ENCODE measurements at regions of chr5 and their contacts with region 1.

Region 1: GRCh38 chr5:151239237-151239861 is 13.6 kb upstream of the GM2A start:
- H3K4me3 Mint-ChIP-seq: no peak overlapping the region
- H3K27ac Mint-ChIP-seq: no peak overlapping the region
- H3K4me1 Mint-ChIP-seq: peaks cover 38% of the 10 kb centered on the region
- H3K27me3 Mint-ChIP-seq: peaks cover 5% of the 10 kb centered on the region

Region 2: DNA sequence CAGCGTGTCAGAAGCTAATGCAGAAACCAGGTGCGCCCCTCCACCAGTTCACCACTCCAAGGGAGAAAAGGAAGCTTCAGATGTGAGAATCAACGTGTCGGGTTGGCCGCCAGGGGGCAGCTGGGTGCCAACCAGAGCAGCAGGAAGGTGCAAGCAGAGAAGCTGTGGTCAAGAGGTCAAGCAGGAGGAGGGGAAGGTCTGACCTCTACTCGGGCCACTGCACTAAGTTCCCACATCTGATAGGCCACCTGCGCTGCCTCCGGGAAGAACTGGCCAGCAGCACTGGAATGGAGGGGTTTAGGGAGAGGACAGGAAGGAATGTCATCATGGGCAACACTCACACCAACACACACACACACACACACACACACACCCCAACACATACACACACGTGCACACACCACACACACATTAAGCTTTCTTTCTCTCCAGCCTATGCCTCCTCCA is 113.1 kb before region 1 on chr5:
- intact Hi-C with region 1: loop called (anchors 5 kb)
- H3K4me3 Mint-ChIP-seq: no peak overlapping the region
- H3K27ac Mint-ChIP-seq: no peak overlapping the region
- H3K4me1 Mint-ChIP-seq: peaks cover 25% of the 10 kb centered on the region
- H3K27me3 Mint-ChIP-seq: no peaks in the 10 kb centered on the region

Region 3: GRCh38 chr5:151196556-151197290 is 42.6 kb before region 1 on chr5:
- intact Hi-C with region 1: loop called (anchors 5 kb)
- H3K4me3 Mint-ChIP-seq: no peak overlapping the region
- H3K27ac Mint-ChIP-seq: no peak overlapping the region
- H3K4me1 Mint-ChIP-seq: peaks cover 28% of the 10 kb centered on the region
- H3K27me3 Mint-ChIP-seq: no peaks in the 10 kb centered on the region

Region 4: GRCh38 chr5:151298063-151298855 is 58.9 kb after region 1 on chr5:
- intact Hi-C with region 1: loop called (anchors 5 kb)
- H3K4me3 Mint-ChIP-seq: no peak overlapping the region
- H3K27ac Mint-ChIP-seq: no peak overlapping the region
- H3K4me1 Mint-ChIP-seq: peaks cover 22% of the 10 kb centered on the region
- H3K27me3 Mint-ChIP-seq: peaks cover 15% of the 10 kb centered on the region